ENCODE measurements at regions of chr10 and their contacts with region 1.

Region 1: DNA sequence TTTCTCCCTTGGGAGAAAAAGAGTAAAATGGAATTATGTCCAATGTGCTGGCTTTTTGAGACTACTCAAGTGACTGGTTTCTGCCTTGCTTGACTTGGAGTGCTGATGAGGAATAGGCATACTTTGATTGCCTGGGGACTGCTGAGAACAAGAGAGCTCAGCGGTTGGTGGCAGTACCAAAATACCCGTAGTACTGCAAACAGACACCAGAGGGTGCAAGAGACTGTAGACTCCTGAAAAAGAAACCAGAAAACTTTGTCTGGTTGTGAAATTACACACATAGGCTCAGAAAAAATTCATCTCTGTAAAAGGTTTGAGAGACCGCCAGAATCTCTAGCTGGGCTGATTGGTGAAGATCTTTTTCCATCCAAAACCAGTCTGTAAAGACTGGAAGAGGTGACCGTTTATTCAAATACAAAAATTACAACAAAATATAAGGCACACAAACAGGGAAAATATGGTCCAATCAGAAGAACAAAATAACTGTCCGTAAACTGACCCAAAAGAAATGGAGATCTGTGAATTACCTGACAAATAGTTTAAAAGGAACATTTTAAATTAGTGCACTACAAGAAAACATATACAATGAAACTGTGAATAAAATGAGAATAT is 18.5 kb downstream of the BICC1 start:
- DNase-seq: no peak
- H3K4me3 ChIP-seq: no peak overlapping the region
- H3K27ac ChIP-seq: no peak overlapping the region
- H3K27me3 ChIP-seq: no peaks in the 10 kb centered on the region
- CTCF ChIP-seq: peak; percentile 85

Region 2: DNA sequence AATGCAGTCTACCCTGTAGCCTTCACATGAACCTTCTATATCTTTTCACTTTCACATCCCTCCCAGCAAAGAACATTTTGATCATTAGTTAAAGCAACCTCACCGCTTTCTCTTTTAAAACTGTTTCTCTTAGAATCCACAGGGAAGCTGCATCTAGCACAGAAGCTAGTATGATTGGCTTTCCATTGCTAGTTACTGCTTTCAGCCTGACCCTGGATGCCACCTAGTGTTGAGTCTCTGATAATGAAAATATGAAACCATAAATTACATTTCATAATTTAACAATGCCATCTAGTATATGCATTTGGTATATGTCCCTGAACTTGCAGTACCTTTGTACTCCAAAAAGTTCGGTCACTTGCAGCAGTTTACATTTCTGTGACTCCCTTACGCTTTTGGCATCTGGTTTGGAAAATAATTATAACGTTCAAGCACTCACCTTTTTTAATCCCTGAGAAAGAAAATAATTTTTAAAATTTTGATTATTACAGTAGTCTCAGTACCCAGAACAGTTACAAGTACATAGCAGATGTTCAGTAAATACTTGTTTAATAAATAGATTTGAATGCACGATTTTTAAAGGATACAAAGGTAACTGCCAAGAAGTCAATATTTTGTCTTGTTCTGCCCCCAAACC is 239.5 kb before region 1 on chr10:
- CTCF ChIA-PET with region 1: no interaction called
- POLR2A ChIA-PET with region 1: no interaction called
- DNase-seq: no peak
- H3K4me3 ChIP-seq: no peak overlapping the region
- H3K27ac ChIP-seq: no peak overlapping the region
- H3K27me3 ChIP-seq: no peaks in the 10 kb centered on the region
- CTCF ChIP-seq: peak; percentile 82

Region 3: DNA sequence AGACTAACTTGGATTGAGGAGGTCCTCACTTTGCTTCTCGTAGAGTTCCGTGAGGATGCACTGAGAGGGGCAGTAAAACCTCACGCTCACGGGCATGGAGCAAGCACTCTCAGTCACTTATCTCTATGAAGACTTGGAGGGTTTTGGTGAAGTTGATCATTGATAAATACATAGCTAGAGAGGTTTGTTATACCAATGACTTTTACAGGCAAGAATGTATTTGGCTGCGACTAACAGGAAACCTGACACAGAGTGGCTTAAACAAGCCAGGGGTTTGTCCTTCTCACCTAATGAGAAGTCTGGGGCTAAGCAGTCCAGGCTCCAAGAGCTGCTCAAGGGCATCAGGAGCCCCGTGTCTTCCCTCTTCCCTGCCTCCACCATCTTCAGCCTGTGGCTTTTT is 12.4 kb before region 1 on chr10:
- CTCF ChIA-PET with region 1: interaction called, 16 read pairs
- POLR2A ChIA-PET with region 1: no interaction called
- DNase-seq: no peak
- H3K4me3 ChIP-seq: no peak overlapping the region
- H3K27ac ChIP-seq: no peak overlapping the region
- H3K27me3 ChIP-seq: no peaks in the 10 kb centered on the region
- CTCF ChIP-seq: no peak

Region 4: DNA sequence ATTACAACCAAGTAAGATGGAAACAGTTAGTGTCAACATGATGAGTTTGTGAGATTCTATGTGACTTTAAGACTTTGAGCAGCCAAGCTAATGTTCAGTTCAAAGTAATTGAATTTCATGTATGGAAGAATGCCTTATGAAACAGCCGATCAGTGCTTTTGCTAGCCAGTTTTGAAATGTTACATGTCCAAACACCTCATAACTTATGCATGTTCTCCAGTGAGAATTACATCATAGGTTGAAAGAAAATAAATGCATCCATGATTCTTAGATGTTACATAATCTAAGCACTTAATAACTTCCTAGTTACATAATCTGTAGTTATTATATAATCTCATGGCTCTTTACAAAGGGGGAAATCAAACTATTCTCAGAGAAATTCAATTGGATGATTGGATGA is 192.8 kb after region 1 on chr10:
- CTCF ChIA-PET with region 1: interaction called, 14 read pairs
- POLR2A ChIA-PET with region 1: no interaction called
- DNase-seq: no peak
- H3K4me3 ChIP-seq: no peak overlapping the region
- H3K27ac ChIP-seq: no peak overlapping the region
- H3K27me3 ChIP-seq: no peaks in the 10 kb centered on the region
- CTCF ChIP-seq: no peak

Region 5: DNA sequence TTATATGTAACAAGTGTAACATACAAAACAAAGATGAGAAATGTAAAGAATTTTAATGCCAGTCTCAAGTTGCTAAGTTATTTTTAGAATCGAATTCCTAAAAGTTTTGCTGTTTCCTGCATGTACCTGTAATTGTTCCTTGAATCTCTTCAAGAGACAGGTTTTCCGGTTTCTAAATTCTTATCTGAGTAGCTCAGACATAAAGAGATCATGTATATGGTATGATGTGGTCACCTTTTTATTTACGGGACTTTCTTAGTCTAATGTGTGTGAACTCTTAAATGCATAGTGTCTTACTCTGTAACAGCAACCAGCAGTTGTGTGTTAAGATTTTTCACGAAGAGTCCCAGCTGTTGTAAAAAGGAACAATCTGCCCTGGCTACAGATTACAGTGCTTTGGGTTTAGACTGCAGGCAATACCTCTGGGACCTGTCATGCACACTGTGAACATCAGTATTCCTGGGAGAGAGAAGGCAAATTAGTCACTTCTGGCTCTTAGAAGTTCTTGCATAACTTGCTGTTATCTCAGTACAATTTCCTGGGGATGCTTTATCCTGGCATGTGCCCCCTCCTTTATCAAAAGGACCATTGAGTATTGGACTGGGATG is 244.9 kb after region 1 on chr10:
- CTCF ChIA-PET with region 1: interaction called, 15 read pairs
- POLR2A ChIA-PET with region 1: no interaction called
- DNase-seq: peak; percentile 33
- H3K4me3 ChIP-seq: no peak overlapping the region
- H3K27ac ChIP-seq: peak overlapping the region; percentile 32
- H3K27me3 ChIP-seq: no peaks in the 10 kb centered on the region
- CTCF ChIP-seq: no peak

Region 6: GRCh38 chr10:58781873-58782488 is 250.8 kb after region 1 on chr10:
- CTCF ChIA-PET with region 1: interaction called, 15 read pairs
- POLR2A ChIA-PET with region 1: no interaction called
- DNase-seq: no peak
- H3K4me3 ChIP-seq: no peak overlapping the region
- H3K27ac ChIP-seq: no peak overlapping the region
- H3K27me3 ChIP-seq: no peaks in the 10 kb centered on the region
- CTCF ChIP-seq: peak; percentile 58

Measured in AG04450 (cell line).